Naive thymus-derived CD4-positive, alpha-beta T cell (primary cell): ENCODE measurements at regions of chr10 and their contacts with region 1.

Region 1: DNA sequence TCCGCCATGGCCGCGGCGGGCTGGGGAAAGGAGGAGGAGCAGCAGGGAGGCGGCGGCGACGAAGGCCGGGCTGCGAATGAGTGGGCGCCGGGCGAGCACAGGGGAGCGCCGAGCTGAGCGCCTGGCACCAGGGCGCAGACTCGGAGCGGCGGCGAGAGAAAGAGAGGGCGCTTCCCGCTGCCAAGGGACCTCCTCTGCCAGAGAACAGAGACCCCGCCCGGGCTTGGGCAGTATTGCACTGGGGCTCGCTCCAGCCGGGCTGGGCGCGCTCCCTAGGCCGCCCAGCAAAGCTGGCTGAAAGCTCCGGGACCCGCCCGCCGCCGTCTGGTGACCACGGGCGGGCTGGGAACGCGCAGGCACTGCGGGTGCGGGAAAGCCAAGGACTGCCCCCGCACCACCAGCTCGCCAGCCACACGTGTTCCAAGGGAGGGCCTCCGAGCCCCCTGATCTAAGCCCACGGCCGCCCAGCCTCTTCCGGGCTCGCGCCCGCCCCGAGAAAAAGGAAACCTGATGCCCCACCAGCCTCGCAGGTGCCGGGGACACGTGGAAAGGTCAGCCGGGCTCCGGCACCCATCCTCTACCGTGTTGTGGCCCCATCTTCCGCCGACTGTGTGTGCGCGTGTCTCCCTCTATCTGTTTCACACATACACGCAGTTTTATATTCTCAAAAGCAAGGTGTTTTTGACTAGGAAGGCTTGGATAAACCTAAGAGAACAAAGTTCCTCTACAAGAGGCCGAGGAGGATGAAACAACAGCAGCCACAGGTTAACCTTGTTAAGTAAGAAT is at the start of gene CCDC6:
- DNase-seq: peak; percentile 87 to 92 (median 91)
- ATAC-seq: peak; percentile 92
- H3K4me3 ChIP-seq: peak within 1 kb of the TSS; percentile 72
- H3K4me3 Mint-ChIP-seq: peak within 1 kb of the TSS; percentile 91 to 99 (median 96)
- H3K27ac ChIP-seq: peak within 1 kb of the TSS; percentile 85
- H3K27ac Mint-ChIP-seq: peak within 1 kb of the TSS; percentile 92 to 98 (median 97)
- H3K4me1 ChIP-seq: peaks cover 22 to 36% of the 10 kb centered on the region in 2 donors
- H3K4me1 Mint-ChIP-seq: peaks cover 47 to 71% (median 64%) of the 10 kb centered on the region in 7 donors
- H3K27me3 ChIP-seq: no peaks in the 10 kb centered on the region
- H3K27me3 Mint-ChIP-seq: no peaks in the 10 kb centered on the region
- total RNA-seq, gene CCDC6: 19.7 to 34.3 (median 21.4) TPM

Region 2: GRCh38 chr10:58334817-58335305 is 1571.7 kb before region 1 on chr10 and contains the start of gene UBE2D1:
- CTCF ChIA-PET with region 1: no interaction called
- POLR2A ChIA-PET with region 1: no interaction called
- intact Hi-C with region 1: loop called in 1 of 2 experiments (anchors 2 kb)
- DNase-seq: peak; percentile 60 to 84 (median 74)
- ATAC-seq: peak; percentile 98
- H3K4me3 ChIP-seq: peak within 1 kb of the TSS; percentile 71
- H3K4me3 Mint-ChIP-seq: peak within 1 kb of the TSS; percentile 88 to 98 (median 96)
- H3K27ac ChIP-seq: peak within 1 kb of the TSS; percentile 78
- H3K27ac Mint-ChIP-seq: peak within 1 kb of the TSS; percentile 77 to 96 (median 87)
- H3K4me1 ChIP-seq: peaks cover 0 to 15% of the 10 kb centered on the region in 2 donors
- H3K4me1 Mint-ChIP-seq: peaks cover 25 to 44% (median 38%) of the 10 kb centered on the region in 7 donors
- H3K27me3 ChIP-seq: no peaks in the 10 kb centered on the region
- H3K27me3 Mint-ChIP-seq: peaks cover 0 to 7% (median 4%) of the 10 kb centered on the region in 5 donors
- total RNA-seq, gene UBE2D1: 11.3 to 23.8 (median 12.8) TPM

Region 3: DNA sequence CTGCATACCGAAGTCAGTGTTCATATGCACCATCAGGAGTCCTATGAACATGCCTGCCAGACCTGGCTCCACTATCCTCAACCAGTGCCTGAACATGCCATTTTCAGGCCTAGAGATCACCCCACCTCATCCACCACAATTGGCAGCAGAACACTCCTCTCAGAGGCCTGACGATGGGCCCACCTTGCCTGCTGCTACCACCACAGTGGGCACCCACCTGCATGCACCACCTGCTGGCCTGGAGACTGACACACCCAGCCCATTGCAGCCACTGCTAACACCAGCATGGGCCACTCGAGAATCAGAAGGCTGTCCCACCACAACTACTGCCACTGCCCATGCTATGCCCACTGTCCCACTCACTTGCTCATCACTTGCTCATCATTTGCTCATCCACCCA is 413.6 kb before region 1 on chr10:
- CTCF ChIA-PET with region 1: no interaction called
- POLR2A ChIA-PET with region 1: no interaction called
- intact Hi-C with region 1: no loop called
- DNase-seq: no peak
- ATAC-seq: no peak
- H3K4me3 ChIP-seq: no peak overlapping the region
- H3K4me3 Mint-ChIP-seq: no peak overlapping the region
- H3K27ac ChIP-seq: no peak overlapping the region
- H3K27ac Mint-ChIP-seq: no peak overlapping the region
- H3K4me1 ChIP-seq: no peaks in the 10 kb centered on the region
- H3K4me1 Mint-ChIP-seq: peaks cover 0 to 5% (median 0%) of the 10 kb centered on the region in 7 donors
- H3K27me3 ChIP-seq: no peaks in the 10 kb centered on the region
- H3K27me3 Mint-ChIP-seq: no peaks in the 10 kb centered on the region

Region 4: GRCh38 chr10:59808896-59809643 is 97.5 kb before region 1 on chr10:
- CTCF ChIA-PET with region 1: no interaction called
- POLR2A ChIA-PET with region 1: no interaction called
- intact Hi-C with region 1: loop called (anchors 2 to 5 kb)
- DNase-seq: peak in 8 of 9 donors; percentile 14 to 66 (median 21)
- ATAC-seq: peak; percentile 87
- H3K4me3 ChIP-seq: no peak overlapping the region
- H3K4me3 Mint-ChIP-seq: no peak overlapping the region
- H3K27ac ChIP-seq: no peak overlapping the region
- H3K27ac Mint-ChIP-seq: peak overlapping the region in 2 of 9 donors; percentile 12 to 47
- H3K4me1 ChIP-seq: no peaks in the 10 kb centered on the region
- H3K4me1 Mint-ChIP-seq: peaks cover 0 to 5% (median 0%) of the 10 kb centered on the region in 7 donors
- H3K27me3 ChIP-seq: no peaks in the 10 kb centered on the region
- H3K27me3 Mint-ChIP-seq: no peaks in the 10 kb centered on the region

Region 5: DNA sequence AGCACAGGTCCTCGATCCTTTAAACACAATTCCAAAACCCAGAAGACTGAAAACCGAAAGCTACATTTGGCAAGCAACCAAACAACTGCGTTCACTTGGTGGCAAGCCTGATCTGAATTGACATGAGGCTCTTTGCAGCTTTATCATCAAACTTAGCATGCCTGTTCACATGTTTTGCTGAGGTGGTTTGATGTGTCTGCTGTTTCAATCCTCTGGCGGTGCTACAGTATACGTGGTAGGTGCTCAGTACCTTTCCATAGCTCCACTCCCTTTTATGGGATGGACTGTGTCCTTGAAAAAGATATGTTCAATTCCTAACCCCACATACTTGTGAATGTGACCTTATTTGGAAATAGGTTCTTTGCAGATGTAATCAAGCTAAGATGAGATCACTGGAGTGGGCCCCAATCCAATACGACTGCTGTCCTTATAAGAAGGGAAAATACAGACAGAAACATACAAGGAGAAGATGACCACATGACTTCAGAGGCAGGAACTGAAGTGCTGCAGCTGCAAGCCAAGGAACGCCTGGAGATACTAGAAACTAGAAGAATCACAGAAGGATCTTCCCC is 33.6 kb before region 1 on chr10:
- CTCF ChIA-PET with region 1: interaction called, 4 read pairs
- POLR2A ChIA-PET with region 1: interaction called, 9 read pairs
- intact Hi-C with region 1: loop called in 1 of 2 experiments (anchors 2 kb)
- DNase-seq: peak in 5 of 9 donors; percentile 4 to 28 (median 19)
- ATAC-seq: peak; percentile 44
- H3K4me3 ChIP-seq: no peak overlapping the region
- H3K4me3 Mint-ChIP-seq: peak overlapping the region; percentile 50 to 85 (median 72)
- H3K27ac ChIP-seq: no peak overlapping the region
- H3K27ac Mint-ChIP-seq: peak overlapping the region; percentile 52 to 93 (median 74)
- H3K4me1 ChIP-seq: peaks cover 5 to 20% of the 10 kb centered on the region in 2 donors
- H3K4me1 Mint-ChIP-seq: peaks cover 42 to 88% (median 77%) of the 10 kb centered on the region in 7 donors
- H3K27me3 ChIP-seq: no peaks in the 10 kb centered on the region
- H3K27me3 Mint-ChIP-seq: no peaks in the 10 kb centered on the region

Region 6: GRCh38 chr10:60032723-60033122 is 126.1 kb after region 1 on chr10:
- CTCF ChIA-PET with region 1: no interaction called
- POLR2A ChIA-PET with region 1: no interaction called
- intact Hi-C with region 1: loop called in 1 of 2 experiments (anchors 2 kb)
- DNase-seq: peak in 7 of 9 donors; percentile 5 to 31 (median 12)
- ATAC-seq: peak; percentile 86
- H3K4me3 ChIP-seq: no peak overlapping the region
- H3K4me3 Mint-ChIP-seq: no peak overlapping the region
- H3K27ac ChIP-seq: no peak overlapping the region
- H3K27ac Mint-ChIP-seq: peak overlapping the region in 1 of 9 donors; percentile 32
- H3K4me1 ChIP-seq: no peaks in the 10 kb centered on the region
- H3K4me1 Mint-ChIP-seq: peaks cover 0 to 9% (median 0%) of the 10 kb centered on the region in 7 donors
- H3K27me3 ChIP-seq: no peaks in the 10 kb centered on the region
- H3K27me3 Mint-ChIP-seq: no peaks in the 10 kb centered on the region

Region 7: GRCh38 chr10:60351191-60351853 is 444.7 kb after region 1 on chr10:
- CTCF ChIA-PET with region 1: no interaction called
- POLR2A ChIA-PET with region 1: no interaction called
- intact Hi-C with region 1: no loop called
- DNase-seq: no peak
- ATAC-seq: peak; percentile 47
- H3K4me3 ChIP-seq: no peak overlapping the region
- H3K4me3 Mint-ChIP-seq: no peak overlapping the region
- H3K27ac ChIP-seq: no peak overlapping the region
- H3K27ac Mint-ChIP-seq: peak overlapping the region in 1 of 9 donors; percentile 38
- H3K4me1 ChIP-seq: no peaks in the 10 kb centered on the region
- H3K4me1 Mint-ChIP-seq: peaks cover 0 to 43% (median 12%) of the 10 kb centered on the region in 7 donors
- H3K27me3 ChIP-seq: no peaks in the 10 kb centered on the region
- H3K27me3 Mint-ChIP-seq: no peaks in the 10 kb centered on the region